Activated CD8-positive, alpha-beta memory T cell treated with anti-CD3 and anti-CD28 coated beads, Interleukin-2, amount 10 ng/mL, durations not matched to agents 7 days and 5 days (primary cell): ENCODE measurements at regions of chrX and their contacts with region 1.

Region 1: GRCh38 chrX:47384502-47384901 is 14.1 kb downstream of the ZNF157 start:
- DNase-seq: peak; percentile 73
- ATAC-seq: peak; percentile 73
- H3K4me3 Mint-ChIP-seq: no peak overlapping the region
- H3K27ac Mint-ChIP-seq: no peak overlapping the region
- H3K4me1 Mint-ChIP-seq: peaks cover 18% of the 10 kb centered on the region
- H3K27me3 Mint-ChIP-seq: no peaks in the 10 kb centered on the region

Region 2: GRCh38 chrX:47272013-47272408 is 112.5 kb before region 1 on chrX:
- CTCF ChIA-PET with region 1: no interaction called
- DNase-seq: no peak
- ATAC-seq: no peak
- H3K4me3 Mint-ChIP-seq: no peak overlapping the region
- H3K27ac Mint-ChIP-seq: no peak overlapping the region
- H3K4me1 Mint-ChIP-seq: peaks cover 1% of the 10 kb centered on the region
- H3K27me3 Mint-ChIP-seq: no peaks in the 10 kb centered on the region

Region 3: DNA sequence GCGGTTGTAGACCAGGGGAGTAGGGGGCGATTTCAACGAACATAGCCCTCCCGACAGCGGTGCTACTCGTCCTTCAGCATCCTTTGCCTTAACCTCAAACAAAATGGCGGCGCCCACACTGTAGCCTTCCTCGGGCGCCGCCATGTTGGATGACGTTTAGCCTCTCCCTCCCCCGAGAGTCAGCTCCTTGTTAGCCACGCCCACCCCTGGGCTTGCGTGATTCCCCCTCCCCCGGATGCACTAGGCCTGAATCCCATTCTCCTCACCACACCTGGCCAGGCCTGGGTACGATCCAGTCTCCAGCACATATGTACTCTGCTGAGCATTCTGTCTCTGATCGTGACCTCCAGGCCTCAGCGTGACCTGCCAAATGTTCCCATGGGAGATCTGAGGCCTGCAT is 63.1 kb before region 1 on chrX:
- CTCF ChIA-PET with region 1: no interaction called
- DNase-seq: no peak
- ATAC-seq: no peak
- H3K4me3 Mint-ChIP-seq: no peak overlapping the region
- H3K27ac Mint-ChIP-seq: no peak overlapping the region
- H3K4me1 Mint-ChIP-seq: no peaks in the 10 kb centered on the region
- H3K27me3 Mint-ChIP-seq: no peaks in the 10 kb centered on the region

Region 4: GRCh38 chrX:47523297-47523696 is 138.8 kb after region 1 on chrX:
- CTCF ChIA-PET with region 1: interaction called, 17 read pairs
- DNase-seq: peak; percentile 82
- ATAC-seq: peak; percentile 100
- H3K4me3 Mint-ChIP-seq: peak overlapping the region; percentile 56
- H3K27ac Mint-ChIP-seq: no peak overlapping the region
- H3K4me1 Mint-ChIP-seq: peaks cover 6% of the 10 kb centered on the region
- H3K27me3 Mint-ChIP-seq: peaks cover 2% of the 10 kb centered on the region